WTC11 (cell line): ENCODE measurements at regions of chr17 and their contacts with region 1.

Region 1: DNA sequence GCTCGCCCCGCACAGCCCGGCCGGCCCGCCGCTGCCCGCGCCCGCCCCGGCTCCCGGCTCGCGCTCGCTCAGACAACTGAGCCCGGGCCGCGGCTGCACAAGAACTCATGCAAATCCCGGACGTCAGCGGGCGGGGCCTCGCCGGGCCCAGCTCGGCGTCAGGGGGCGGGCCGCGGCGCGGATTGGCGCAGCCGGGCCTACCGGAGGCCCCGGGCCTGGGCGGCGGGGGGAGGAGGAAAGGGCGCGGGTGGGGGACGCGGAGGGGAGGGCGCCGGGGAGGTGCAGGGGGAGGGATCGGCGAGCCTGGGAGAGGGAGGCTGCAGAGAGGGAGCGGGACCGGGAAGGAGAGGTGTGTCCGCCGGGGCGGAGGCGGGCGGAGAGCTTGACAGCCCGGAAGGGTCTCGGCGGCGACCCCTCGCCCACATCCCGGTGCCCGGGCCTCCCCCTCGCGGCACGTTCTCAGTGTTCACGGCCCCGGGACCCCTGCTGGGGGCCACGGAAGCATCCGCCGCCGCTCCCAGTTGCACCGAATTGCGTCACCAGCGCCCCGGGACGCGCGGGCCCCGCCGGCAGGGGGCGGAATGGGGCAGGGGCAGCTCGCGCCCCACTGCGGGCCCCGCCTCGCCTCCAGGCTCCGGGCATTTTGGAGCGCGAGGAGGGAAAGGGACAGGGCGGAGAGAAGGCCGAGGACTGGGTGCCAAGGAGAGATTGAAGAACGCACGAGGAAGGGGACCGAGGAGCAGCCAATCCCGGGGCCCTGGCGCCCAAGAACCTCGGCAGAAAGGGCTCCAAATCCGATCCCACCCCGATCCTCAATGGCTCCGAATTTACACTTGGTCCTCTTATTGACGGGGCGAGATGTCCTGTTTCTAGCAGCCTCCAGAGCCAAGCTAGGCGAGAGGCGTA is at the start of gene CBX4:
- DNase-seq: peak; percentile 91
- ATAC-seq: peak; percentile 24
- H3K4me3 Mint-ChIP-seq: peak within 1 kb of the TSS; percentile 72
- H3K27ac Mint-ChIP-seq: no peak within 1 kb of the TSS; the same call in 1 of the 2 replicates
- H3K4me1 Mint-ChIP-seq: peaks cover 31% of the 10 kb centered on the region
- H3K27me3 Mint-ChIP-seq: peaks cover 89% of the 10 kb centered on the region
- CTCF ChIP-seq: peak; percentile 57
- total RNA-seq, gene CBX4: 3.2 to 3.9 TPM (median 3.3 TPM) in 3 replicates

Region 2: GRCh38 chr17:79272666-79273219 is 566.9 kb before region 1 on chr17:
- CTCF ChIA-PET with region 1: no interaction called
- POLR2A ChIA-PET with region 1: no interaction called
- DNase-seq: no peak
- ATAC-seq: no peak
- H3K4me3 Mint-ChIP-seq: no peak overlapping the region
- H3K27ac Mint-ChIP-seq: no peak overlapping the region
- H3K4me1 Mint-ChIP-seq: peaks cover 41% of the 10 kb centered on the region
- H3K27me3 Mint-ChIP-seq: peaks cover 4% of the 10 kb centered on the region; the same call in 1 of the 2 replicates
- CTCF ChIP-seq: no peak

Region 3: GRCh38 chr17:79695797-79696609 is 143.6 kb before region 1 on chr17:
- CTCF ChIA-PET with region 1: no interaction called
- POLR2A ChIA-PET with region 1: no interaction called
- DNase-seq: no peak
- ATAC-seq: no peak
- H3K4me3 Mint-ChIP-seq: no peak overlapping the region
- H3K27ac Mint-ChIP-seq: no peak overlapping the region
- H3K4me1 Mint-ChIP-seq: peaks cover 55% of the 10 kb centered on the region
- H3K27me3 Mint-ChIP-seq: no peaks in the 10 kb centered on the region
- CTCF ChIP-seq: no peak

Region 4: GRCh38 chr17:79761894-79762589 is 77.6 kb before region 1 on chr17:
- CTCF ChIA-PET with region 1: no interaction called
- POLR2A ChIA-PET with region 1: no interaction called
- DNase-seq: no peak
- ATAC-seq: no peak
- H3K4me3 Mint-ChIP-seq: no peak overlapping the region
- H3K27ac Mint-ChIP-seq: no peak overlapping the region
- H3K4me1 Mint-ChIP-seq: no peaks in the 10 kb centered on the region
- H3K27me3 Mint-ChIP-seq: no peaks in the 10 kb centered on the region
- CTCF ChIP-seq: no peak

Region 5: GRCh38 chr17:79777894-79778503 is 61.6 kb before region 1 on chr17 and contains the start of gene CBX2:
- CTCF ChIA-PET with region 1: interaction called, 17 read pairs
- POLR2A ChIA-PET with region 1: interaction called, 4 read pairs
- DNase-seq: peak; percentile 75
- ATAC-seq: peak; percentile 55
- H3K4me3 Mint-ChIP-seq: peak within 1 kb of the TSS; percentile 91
- H3K27ac Mint-ChIP-seq: peak within 1 kb of the TSS; percentile 93
- H3K4me1 Mint-ChIP-seq: peaks cover 54% of the 10 kb centered on the region
- H3K27me3 Mint-ChIP-seq: peaks cover 15% of the 10 kb centered on the region
- CTCF ChIP-seq: no peak
- total RNA-seq, gene CBX2: 78.1 to 85.5 TPM (median 78.7 TPM) in 3 replicates

Region 6: DNA sequence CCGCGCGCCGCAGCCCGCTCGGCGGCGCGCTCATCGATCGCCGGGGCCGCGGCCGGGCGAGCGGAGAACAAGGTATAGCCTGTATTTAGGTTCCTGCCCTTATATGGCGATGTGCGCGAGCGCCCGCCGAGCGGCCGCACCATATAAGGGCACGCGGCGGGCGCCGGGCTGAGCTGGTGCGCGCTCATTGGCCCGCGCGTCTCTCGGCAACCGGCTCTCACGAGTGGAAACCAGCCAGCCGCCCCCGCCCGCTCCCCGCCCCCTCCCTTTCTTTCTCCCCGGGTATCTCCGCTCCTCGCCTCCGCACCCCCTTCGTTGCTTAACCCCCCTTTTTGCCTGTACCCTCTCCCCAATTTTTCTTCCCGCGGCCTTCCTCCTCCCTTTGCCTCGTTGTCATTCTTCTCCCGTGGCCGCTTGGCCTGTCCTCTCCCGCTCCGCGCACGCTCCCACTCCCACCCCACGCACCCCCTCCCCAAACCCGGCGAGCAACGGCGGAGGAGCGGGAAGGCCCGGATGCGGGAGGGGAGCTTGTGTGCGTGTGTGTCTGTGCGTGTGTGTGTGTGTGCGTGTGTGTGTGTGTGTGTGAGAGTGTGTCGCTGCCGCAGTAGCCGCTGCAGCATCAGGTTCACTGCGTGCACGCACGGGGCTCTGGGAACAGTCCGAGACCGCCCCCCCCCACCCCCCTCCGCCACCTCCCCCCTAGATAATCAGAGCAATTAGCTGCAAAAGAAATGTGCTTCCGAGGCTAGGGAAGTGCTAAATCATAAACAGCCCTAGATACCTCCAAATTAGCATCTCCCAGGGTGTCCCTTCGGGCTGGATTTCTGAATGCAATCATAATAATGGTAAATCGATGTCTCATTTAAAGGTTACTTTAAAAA is 29.2 kb before region 1 on chr17:
- CTCF ChIA-PET with region 1: interaction called, 464 read pairs
- POLR2A ChIA-PET with region 1: interaction called, 68 read pairs
- DNase-seq: peak; percentile 83
- ATAC-seq: peak; percentile 74
- H3K4me3 Mint-ChIP-seq: peak overlapping the region; percentile 59
- H3K27ac Mint-ChIP-seq: no peak overlapping the region
- H3K4me1 Mint-ChIP-seq: peaks cover 40% of the 10 kb centered on the region
- H3K27me3 Mint-ChIP-seq: peaks cover 92% of the 10 kb centered on the region
- CTCF ChIP-seq: no peak

Region 7: GRCh38 chr17:79874329-79874981 is 34.8 kb after region 1 on chr17:
- CTCF ChIA-PET with region 1: interaction called, 11 read pairs
- POLR2A ChIA-PET with region 1: no interaction called
- DNase-seq: no peak
- ATAC-seq: peak; percentile 62; the same call in 1 of the 2 replicates
- H3K4me3 Mint-ChIP-seq: no peak overlapping the region
- H3K27ac Mint-ChIP-seq: no peak overlapping the region
- H3K4me1 Mint-ChIP-seq: peaks cover 6% of the 10 kb centered on the region; the same call in 1 of the 2 replicates
- H3K27me3 Mint-ChIP-seq: peaks cover 4% of the 10 kb centered on the region; the same call in 1 of the 2 replicates
- CTCF ChIP-seq: no peak; the same call in 1 of the 2 replicates

Region 8: DNA sequence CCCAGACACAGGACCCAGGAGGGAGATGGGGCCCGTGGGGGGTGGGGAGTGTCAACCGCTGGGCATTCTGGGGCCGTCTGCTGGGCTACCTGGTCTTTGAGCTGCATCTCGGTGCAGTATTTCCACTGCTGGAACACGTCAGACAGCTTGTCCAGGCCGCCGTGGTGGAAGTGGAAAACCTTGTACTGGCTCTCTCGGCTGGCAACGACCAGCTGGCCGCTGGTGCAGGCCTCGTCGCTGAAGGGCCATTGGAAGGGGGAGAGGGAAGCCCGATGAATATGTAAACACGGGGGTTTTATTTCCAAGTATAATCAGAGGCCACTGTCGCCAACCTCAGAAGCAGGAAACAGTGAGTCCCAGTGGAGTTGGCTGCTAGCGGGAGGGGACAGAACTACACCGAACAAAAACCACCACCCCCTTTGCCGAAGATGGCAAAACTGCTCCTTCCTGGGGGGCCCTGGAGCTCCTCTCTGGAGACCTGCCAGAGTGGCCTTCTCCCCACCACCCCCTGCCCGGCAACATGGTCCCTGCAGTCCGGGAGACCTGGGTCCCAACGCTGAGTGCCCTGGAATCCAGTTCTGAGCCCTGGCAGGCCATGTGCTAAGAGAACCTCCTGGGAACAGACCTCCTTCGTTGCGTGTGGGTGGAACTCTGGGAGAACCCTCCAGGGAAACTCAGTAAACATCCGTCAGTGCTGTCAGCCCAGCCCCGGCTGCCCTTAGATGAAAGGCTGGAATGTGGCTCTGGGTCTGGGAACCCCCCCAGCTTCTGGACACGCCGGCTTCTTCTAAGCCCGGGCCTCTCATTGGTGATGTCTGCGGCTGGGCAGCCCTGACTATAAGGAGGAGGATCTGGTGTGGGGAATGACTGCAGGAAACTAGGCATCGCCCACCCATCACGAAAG is 112.0 kb after region 1 on chr17:
- CTCF ChIA-PET with region 1: interaction called, 15 read pairs
- POLR2A ChIA-PET with region 1: interaction called, 5 read pairs
- DNase-seq: no peak
- ATAC-seq: no peak
- H3K4me3 Mint-ChIP-seq: peak overlapping the region; percentile 68
- H3K27ac Mint-ChIP-seq: peak overlapping the region; percentile 100
- H3K4me1 Mint-ChIP-seq: peaks cover 84% of the 10 kb centered on the region
- H3K27me3 Mint-ChIP-seq: no peaks in the 10 kb centered on the region
- CTCF ChIP-seq: no peak